Activated CD4-positive, alpha-beta memory T cell treated with anti-CD3 and anti-CD28 coated beads, Interleukin-2, amount 10 ng/mL, durations not matched to agents 7 days and 5 days (primary cell): ENCODE measurements at regions of chr1 and their contacts with region 1.

Region 1: DNA sequence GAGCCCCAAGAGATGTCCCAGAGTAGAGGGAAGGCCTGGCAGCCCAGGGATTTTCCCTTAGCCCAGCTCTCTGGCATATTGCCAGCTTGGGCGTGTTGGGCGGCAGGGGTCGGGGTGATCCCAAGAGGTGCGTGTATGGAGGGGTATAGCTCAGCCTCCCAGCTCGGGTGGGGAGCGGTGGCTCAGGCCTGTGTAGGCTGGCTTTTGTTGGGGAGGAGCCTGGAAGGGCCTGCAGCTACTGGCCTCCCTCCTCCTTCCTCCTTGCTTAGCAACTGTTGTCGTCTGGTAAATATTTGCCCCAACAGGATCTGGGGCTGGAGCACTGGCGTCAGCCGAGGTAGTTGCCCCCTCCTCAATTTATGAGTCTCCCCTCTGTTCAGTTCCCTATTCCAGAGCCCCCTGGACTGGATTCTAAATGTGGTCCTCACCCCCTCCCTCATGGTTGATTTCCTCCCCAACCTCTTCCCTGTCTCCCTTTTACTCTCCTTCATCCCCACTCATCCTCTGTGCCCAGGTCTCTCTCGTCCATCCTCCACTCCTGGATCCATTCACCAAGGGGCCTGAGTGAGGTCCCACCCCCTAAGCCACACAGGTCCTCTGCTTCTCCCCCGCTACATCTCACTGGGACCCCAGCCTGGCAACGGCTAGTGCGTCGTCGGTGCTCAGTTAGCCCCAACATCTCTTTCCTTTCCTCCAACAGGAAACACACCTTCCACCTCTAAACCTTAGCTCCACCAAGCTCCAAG is 10.3 kb upstream of the LMNA start:
- DNase-seq: peak; percentile 41
- H3K4me3 Mint-ChIP-seq: no peak overlapping the region
- H3K27ac Mint-ChIP-seq: peak overlapping the region; percentile 50
- H3K4me1 Mint-ChIP-seq: peaks cover 48% of the 10 kb centered on the region
- H3K27me3 Mint-ChIP-seq: peaks cover 6% of the 10 kb centered on the region

Region 2: GRCh38 chr1:156122519-156123355 is 18.5 kb after region 1 on chr1:
- CTCF ChIA-PET with region 1: interaction called, 612 read pairs
- POLR2A ChIA-PET with region 1: interaction called, 222 read pairs
- DNase-seq: no peak
- H3K4me3 Mint-ChIP-seq: no peak overlapping the region
- H3K27ac Mint-ChIP-seq: peak overlapping the region; percentile 78
- H3K4me1 Mint-ChIP-seq: peaks cover 83% of the 10 kb centered on the region
- H3K27me3 Mint-ChIP-seq: no peaks in the 10 kb centered on the region

Region 3: GRCh38 chr1:156129706-156130581 is 25.7 kb after region 1 on chr1:
- CTCF ChIA-PET with region 1: interaction called, 612 read pairs
- POLR2A ChIA-PET with region 1: interaction called, 222 read pairs
- DNase-seq: peak; percentile 83
- H3K4me3 Mint-ChIP-seq: no peak overlapping the region
- H3K27ac Mint-ChIP-seq: no peak overlapping the region
- H3K4me1 Mint-ChIP-seq: peaks cover 53% of the 10 kb centered on the region
- H3K27me3 Mint-ChIP-seq: no peaks in the 10 kb centered on the region

Region 4: DNA sequence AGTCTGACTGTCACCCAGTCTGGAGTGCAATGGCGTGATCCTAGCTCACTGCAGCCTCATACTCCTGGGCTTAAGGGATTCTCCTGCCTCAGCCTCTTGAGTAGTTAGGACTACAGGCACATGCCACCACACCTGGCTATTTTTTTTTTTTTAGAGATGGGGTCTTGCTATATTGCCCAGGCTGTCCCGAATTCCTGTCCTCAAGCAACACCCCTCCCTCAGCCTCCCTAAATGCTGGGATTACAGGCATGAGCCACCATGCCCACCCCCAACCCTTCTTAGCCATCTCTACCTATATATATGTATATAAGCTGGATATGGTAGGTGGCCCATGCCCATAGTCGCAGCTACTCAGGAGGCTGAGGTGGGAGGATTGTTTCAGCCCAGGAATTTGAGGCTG is 76.2 kb after region 1 on chr1:
- CTCF ChIA-PET with region 1: no interaction called
- POLR2A ChIA-PET with region 1: no interaction called
- DNase-seq: no peak
- H3K4me3 Mint-ChIP-seq: no peak overlapping the region
- H3K27ac Mint-ChIP-seq: no peak overlapping the region
- H3K4me1 Mint-ChIP-seq: peaks cover 6% of the 10 kb centered on the region
- H3K27me3 Mint-ChIP-seq: no peaks in the 10 kb centered on the region